Heart left ventricle (tissue), 16 donors: ENCODE measurements at regions of chr17 and their contacts with region 1.

Region 1: GRCh38 chr17:38874505-38875400 is 4.9 kb downstream of the LASP1 start:
- DNase-seq: peak in 1 of 5 donors; percentile 67
- ATAC-seq: peak in 2 of 4 donors; percentile 3 to 19
- H3K4me3 ChIP-seq: peak overlapping the region in 9 of 12 donors; percentile 6 to 83 (median 20)
- H3K27ac ChIP-seq: peak overlapping the region in 11 of 12 donors; percentile 12 to 96 (median 30)
- H3K4me1 ChIP-seq: peaks cover 19 to 87% (median 67%) of the 10 kb centered on the region in 12 donors
- H3K27me3 ChIP-seq: no peaks in the 10 kb centered on the region
- CTCF ChIP-seq: no peak
- POLR2A ChIP-seq: no peak

Region 2: DNA sequence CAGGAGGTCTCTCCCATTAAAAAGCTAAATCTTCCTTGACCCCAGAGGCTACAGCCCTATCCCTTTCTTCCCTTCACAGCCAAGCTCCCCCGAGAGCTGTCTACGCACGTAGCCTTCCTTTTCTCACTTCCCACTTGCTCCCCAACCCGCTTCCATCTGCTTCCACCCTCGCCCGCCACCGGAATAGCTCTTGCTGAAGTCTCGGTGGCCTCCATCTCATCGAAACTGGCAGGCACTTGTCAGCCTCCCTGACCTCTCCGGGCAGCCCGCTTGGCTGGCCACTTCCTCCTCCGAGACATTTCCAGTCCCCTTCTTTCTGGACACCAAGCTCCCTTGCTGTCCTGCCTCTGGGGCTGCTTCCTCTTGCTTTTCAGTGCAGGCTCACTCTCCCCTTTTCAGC is 189.3 kb before region 1 on chr17:
- intact Hi-C with region 1: no loop called
- DNase-seq: peak; percentile 53 to 76 (median 60)
- ATAC-seq: peak; percentile 20 to 65 (median 46)
- H3K4me3 ChIP-seq: no peak overlapping the region
- H3K27ac ChIP-seq: peak overlapping the region in 2 of 12 donors; percentile 17 to 84
- H3K4me1 ChIP-seq: peaks cover 0 to 17% (median 0%) of the 10 kb centered on the region in 12 donors
- H3K27me3 ChIP-seq: no peaks in the 10 kb centered on the region
- CTCF ChIP-seq: no peak
- POLR2A ChIP-seq: no peak

Region 3: DNA sequence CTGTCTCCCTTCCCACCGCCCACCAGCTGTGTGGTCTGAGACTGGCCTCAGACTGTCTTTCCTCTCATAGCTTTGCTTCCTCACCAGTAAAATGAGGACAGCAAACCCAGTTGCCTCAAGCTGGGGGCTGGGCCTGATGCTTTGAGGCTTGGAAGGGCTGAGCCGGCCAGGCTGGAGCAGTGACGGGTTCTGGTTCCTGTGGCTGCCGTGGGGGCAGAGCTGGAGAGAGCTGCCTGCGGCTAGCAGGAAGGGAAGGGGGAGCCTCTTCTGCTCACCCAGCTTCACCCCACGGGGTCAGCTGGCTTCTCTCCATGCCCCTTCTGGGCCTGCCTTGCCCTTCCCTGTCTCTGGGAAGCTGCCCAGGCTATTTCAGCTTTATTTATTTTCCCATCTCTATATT is 18.9 kb after region 1 on chr17:
- intact Hi-C with region 1: loop called in 1 of 10 experiments (anchors 2 kb)
- DNase-seq: peak; percentile 59 to 84 (median 71)
- ATAC-seq: peak in 3 of 4 donors; percentile 53 to 66 (median 55)
- H3K4me3 ChIP-seq: no peak overlapping the region
- H3K27ac ChIP-seq: peak overlapping the region; percentile 38 to 85 (median 68)
- H3K4me1 ChIP-seq: peaks cover 27 to 96% (median 56%) of the 10 kb centered on the region in 12 donors
- H3K27me3 ChIP-seq: no peaks in the 10 kb centered on the region
- CTCF ChIP-seq: no peak
- POLR2A ChIP-seq: no peak

Region 4: DNA sequence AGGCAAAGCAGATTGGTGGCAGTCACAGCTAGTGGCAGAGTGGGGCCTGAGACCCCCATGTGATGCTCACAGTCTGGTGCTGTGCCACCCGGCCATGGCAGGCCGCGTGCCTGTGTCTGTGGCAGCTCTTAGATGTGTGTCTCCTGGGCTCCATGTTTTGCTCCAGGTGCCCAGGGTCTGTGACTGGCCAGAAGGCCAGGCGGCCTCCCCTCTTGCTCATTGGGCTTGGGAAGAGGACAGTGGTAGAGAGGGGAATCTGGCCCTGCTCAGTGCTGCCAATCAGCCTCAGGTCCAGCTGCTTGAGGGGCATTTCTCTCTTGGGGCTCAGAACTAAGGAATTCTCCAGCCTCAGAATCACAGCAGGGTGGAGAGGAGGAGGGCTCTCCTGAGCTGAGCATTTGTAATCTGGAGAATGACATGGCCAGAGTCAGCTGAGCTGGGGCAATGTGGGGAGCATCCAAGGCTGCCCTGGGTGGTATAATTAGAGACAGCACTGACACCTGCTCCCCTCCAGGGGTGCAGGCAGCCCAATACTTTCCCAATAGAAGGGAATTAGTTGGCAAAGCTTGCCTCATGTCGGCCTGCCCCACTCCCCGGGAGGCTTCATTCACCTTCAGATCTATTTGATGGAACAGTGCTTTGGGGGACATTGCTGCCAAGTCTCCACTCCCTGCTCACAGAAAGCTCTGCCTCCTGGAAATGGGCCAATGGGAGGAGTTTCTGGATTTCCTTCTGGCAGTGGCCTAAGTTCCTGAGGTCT is 48.0 kb after region 1 on chr17:
- intact Hi-C with region 1: loop called in 4 of 10 experiments (anchors 2 to 5 kb)
- DNase-seq: peak in 4 of 5 donors; percentile 79 to 89 (median 82)
- ATAC-seq: peak; percentile 26 to 70 (median 66)
- H3K4me3 ChIP-seq: no peak overlapping the region
- H3K27ac ChIP-seq: peak overlapping the region in 11 of 12 donors; percentile 1 to 84 (median 44)
- H3K4me1 ChIP-seq: peaks cover 3 to 67% (median 47%) of the 10 kb centered on the region in 12 donors
- H3K27me3 ChIP-seq: no peaks in the 10 kb centered on the region
- CTCF ChIP-seq: no peak
- POLR2A ChIP-seq: no peak

Region 5: DNA sequence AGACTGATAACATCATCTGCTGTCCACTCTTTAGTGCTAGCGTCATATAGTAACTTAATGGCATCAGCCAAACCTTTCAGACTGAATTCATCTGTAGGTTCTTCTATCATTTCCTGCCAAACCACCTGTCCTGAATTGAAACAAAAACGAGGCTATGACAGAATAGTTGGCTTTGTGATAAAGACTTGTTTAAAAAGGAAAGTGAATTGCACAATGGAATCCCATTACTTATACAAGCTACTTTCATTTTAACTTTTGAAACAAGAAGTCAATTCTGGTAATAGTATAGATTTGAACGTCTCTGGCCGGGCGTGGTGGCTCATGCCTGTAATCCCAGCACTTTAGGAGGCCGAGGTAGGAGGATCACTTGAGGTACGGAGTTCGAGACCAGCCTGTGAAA is 68.9 kb after region 1 on chr17:
- intact Hi-C with region 1: no loop called
- DNase-seq: no peak
- ATAC-seq: no peak
- H3K4me3 ChIP-seq: no peak overlapping the region
- H3K27ac ChIP-seq: no peak overlapping the region
- H3K4me1 ChIP-seq: peaks cover 0 to 7% (median 0%) of the 10 kb centered on the region in 12 donors
- H3K27me3 ChIP-seq: no peaks in the 10 kb centered on the region
- CTCF ChIP-seq: no peak
- POLR2A ChIP-seq: no peak